Activated T-helper 1 cell treated with anti-CD3 and anti-CD28 coated beads, Interleukin-12 subunit alpha, Interleukin-12 subunit beta, Interleukin-2, Interleukin-4 antibody, amounts not matched to agents 30 ng/mL and 10 ng/mL and 1 ng/mL, durations not matched to agents 14 hours and 24 hours and 36 hours (primary cell): ENCODE measurements at regions of chr13 and their contacts with region 1.

Region 1: DNA sequence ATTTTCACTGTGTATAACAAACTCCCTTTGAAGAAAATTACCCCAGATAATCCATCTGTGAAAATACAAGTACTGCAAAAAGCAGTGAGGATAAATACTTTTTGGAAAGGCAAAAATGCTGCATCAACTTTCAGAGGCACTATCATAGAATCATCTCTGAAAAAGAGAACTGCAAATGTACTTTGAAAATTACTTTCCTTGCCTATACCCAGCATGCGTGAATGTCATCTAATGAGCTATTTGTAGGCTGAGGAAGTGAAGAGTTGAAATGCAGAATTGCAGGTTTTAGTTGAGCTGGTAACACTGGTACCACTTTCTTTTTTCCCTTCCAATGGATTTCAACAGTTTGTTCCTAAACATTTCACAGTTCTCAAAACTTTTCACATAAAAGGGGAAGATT is 196.7 kb downstream of the TBC1D4 start:
- DNase-seq: no peak
- H3K4me3 Mint-ChIP-seq: no peak overlapping the region
- H3K27ac Mint-ChIP-seq: no peak overlapping the region
- H3K4me1 Mint-ChIP-seq: no peaks in the 10 kb centered on the region
- H3K27me3 Mint-ChIP-seq: no peaks in the 10 kb centered on the region

Region 2: DNA sequence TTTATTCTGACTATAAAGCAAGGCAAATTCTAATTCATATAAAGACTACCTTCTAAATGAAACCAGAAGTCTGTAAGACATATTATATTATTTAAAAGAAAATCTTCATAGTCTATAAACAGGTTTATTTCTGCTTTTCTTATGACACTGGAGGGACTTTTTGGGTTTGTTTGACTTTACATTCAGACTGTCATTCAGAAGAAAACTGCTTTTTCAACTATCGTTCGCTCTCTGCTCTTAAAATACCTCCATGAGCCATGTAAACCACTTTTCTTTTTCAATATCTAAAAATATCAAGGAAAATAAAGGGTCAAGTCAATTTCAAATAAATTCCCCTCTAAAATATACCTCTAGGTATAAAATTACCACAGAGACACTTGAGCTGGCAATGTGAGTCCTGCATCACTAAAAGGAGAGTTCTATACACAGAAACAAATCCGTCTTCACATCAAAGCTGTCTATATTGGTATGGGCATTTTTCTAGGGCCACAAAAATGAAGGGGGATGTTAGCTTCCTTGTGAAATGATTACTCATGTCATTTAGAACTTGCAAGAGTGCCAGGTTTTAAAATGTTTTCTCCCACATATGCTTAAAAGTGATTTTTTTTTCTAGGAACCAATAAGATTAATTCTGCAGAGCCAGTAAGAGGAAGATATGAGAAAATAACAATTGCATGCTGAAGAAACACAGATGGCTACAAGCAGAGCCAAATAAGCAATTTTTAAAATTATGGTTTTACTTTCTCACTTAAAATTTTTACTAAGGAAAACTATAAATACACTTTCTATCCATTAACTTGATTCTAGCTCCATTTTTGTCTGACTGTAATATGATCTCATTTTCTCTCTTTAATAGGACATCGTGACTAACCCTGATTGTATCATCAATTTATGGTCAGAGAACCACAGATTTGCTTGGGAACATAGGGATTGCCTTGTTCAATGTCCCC is 14.9 kb after region 1 on chr13:
- intact Hi-C with region 1: loop called (anchors 1 kb)
- DNase-seq: no peak
- H3K4me3 Mint-ChIP-seq: peak overlapping the region; percentile 47
- H3K27ac Mint-ChIP-seq: peak overlapping the region; percentile 79
- H3K4me1 Mint-ChIP-seq: peaks cover 47% of the 10 kb centered on the region
- H3K27me3 Mint-ChIP-seq: no peaks in the 10 kb centered on the region